ENCODE measurements at regions of chr16 and their contacts with region 1.

Region 1: GRCh38 chr16:19595043-19595767 is 39.7 kb downstream of the VPS35L start:
- DNase-seq: peak in 1 of 2 donors; percentile 20
- ATAC-seq: peak in 1 of 4 donors; percentile 70
- H3K4me3 ChIP-seq: no peak overlapping the region
- H3K27ac ChIP-seq: no peak overlapping the region
- H3K4me1 ChIP-seq: no peaks in the 10 kb centered on the region
- H3K27me3 ChIP-seq: no peaks in the 10 kb centered on the region
- CTCF ChIP-seq: no peak

Region 2: DNA sequence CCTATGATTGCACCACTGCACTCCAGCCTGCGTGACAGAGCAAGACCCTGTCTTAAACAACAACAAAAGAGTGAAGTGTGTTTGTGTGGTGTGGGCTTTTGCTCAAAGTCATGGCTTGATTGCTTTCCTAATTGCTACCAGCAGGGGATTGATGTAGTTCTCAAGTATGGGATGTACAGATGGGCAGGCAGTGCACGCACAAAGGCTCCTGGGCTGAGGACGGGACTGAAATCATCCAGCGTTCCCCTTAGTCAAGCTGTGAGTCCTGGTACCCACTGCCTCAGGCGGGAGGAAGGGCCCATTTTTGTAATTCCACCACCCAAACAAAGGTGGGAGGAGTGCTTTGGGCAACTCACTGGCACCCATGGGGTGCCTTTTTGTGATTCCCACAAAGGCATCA is 120.6 kb before region 1 on chr16:
- intact Hi-C with region 1: no loop called
- DNase-seq: no peak
- ATAC-seq: no peak
- H3K4me3 ChIP-seq: no peak overlapping the region
- H3K27ac ChIP-seq: no peak overlapping the region
- H3K4me1 ChIP-seq: no peaks in the 10 kb centered on the region
- H3K27me3 ChIP-seq: peaks cover 0 to 3% (median 0%) of the 10 kb centered on the region in 3 donors
- CTCF ChIP-seq: no peak

Region 3: DNA sequence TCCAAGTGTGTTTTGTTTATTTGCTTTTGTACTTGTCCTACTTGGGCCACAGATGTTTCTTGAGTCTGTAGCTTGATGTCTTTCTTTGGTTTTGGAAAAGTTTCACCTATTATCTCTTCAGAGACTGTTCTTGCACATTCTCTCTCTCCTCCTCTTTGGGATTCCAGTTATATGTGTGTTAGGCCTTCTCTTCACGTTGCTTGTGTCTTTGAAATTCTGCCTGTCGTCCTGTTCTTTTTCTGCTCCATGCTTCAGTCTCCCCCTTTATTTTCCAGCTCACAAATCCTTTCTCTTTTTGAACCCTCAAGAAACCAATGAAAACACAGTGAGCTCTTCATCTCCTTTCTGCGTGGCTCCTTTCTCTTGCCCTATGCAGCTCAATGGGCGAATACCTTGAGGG is 31.8 kb before region 1 on chr16:
- intact Hi-C with region 1: loop called in 1 of 2 experiments (anchors 5 kb)
- DNase-seq: no peak
- ATAC-seq: no peak
- H3K4me3 ChIP-seq: no peak overlapping the region
- H3K27ac ChIP-seq: no peak overlapping the region
- H3K4me1 ChIP-seq: no peaks in the 10 kb centered on the region
- H3K27me3 ChIP-seq: no peaks in the 10 kb centered on the region
- CTCF ChIP-seq: no peak